HEK293T (cell line): ENCODE measurements at regions of chr9 and their contacts with region 1.

Region 1: GRCh38 chr9:136277746-136278145 is 26.1 kb downstream of the CCDC187 start:
- DNase-seq: no peak

Region 2: DNA sequence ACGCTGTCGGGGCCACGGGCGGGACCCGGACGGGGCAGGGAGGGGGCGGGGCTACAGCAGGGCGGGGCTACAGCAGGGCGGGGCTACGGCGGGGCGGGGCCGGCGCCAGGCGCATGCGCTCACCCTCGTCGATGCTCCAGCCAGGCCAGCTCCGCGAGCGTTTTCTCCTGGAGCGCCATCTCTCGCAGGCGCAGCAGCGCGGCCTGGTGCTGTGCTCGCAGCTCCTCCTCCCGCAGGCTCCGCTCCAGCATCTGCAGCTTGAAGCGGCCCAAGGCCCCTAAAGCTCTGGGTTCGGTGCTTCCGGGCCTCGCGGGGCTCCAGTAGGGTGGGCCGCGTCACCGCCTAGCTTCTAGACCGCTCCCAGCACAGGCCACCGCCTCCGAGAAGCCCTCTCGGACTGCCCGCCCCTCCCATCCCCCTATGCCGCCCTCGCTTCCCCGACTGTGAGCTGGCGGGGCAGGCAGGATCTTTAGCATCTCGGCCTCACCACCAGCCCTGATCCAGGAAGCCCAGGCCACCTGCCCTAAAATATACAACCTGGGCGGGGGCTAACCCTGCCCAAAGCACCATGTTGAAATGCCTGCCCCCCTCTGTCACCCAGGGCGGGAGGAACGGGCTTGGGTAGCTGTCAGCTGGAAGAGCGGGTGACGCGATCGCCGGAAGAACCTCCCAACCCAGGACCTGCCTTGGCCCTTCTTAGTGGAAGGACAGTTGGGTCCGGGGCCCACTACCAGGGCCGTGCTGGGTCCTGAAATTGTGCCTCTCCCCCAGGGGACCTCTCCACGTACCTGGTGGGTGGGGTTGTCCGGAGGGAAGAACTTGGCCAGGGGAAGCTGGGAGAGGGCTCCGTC is 10.3 kb before region 1 on chr9:
- CTCF ChIA-PET with region 1: interaction called, 3 read pairs
- POLR2A ChIA-PET with region 1: interaction called, 11 read pairs
- DNase-seq: peak; percentile 99